Right ventricle myocardium inferior (tissue), 1 donor: ENCODE measurements at regions of chr20 and their contacts with region 1.

Region 1: DNA sequence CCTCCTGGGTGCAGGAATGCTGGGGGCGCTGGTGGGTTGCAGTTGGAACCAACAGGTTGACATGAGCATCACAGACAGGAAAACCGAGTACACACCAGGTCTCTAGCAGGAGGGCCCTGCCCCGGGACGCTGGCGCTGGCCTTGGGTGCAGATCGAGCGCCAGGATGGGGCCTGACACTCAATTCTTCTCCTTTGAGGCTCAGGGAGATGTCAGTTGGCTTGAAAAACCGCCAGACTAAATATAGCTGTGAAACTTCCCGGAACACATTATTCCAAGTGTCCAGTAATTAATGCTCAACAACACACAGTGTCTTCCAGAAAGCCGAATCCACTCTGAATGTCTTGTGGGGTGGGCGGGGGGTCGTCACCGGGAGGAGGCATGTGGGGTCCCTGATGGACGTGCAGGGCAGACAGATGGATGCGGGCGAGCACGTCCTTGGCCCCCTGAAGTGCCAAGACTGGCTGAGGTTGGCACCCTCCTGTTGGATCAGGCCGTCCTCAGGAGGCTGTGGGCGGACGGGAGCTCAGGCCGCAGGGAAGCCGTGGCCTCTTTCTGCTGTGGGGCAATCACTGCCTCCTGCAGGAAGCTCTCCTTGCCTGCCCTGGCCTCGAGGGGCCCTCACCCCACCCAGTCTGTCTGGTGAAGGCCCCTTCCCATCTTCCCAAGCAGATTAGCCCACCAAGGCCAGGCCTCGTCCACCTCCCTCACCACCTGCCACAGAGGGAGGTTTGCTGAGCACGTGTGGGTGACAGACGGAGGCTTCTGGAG is 19.4 kb upstream of the GATA5 start:
- DNase-seq: no peak
- ATAC-seq: peak; percentile 37

Region 2: GRCh38 chr20:62544505-62545055 is 49.4 kb after region 1 on chr20:
- intact Hi-C with region 1: no loop called
- DNase-seq: no peak
- ATAC-seq: no peak

Region 3: DNA sequence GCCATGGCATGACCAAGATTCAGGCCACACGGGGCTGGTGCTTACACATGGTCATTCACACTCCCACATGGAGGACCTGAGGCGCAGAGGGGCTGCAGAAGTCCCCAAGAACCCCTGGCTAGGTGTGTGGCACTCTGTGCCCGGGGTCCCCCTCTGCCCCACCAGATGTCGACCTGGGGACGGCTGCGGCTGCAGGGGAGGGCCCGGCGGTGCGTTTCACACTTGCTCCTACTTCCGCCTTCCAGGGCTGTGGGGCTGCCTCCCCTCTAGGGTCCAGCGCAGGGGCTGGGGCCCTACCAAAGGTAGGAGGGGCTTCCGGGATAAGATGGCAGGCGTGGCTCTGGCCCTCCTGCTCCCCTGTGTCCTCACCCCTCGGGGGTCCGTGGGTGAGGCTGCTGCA is 66.0 kb after region 1 on chr20:
- intact Hi-C with region 1: loop called (anchors 2 kb)
- DNase-seq: no peak
- ATAC-seq: no peak